Endothelial cell of umbilical vein (primary cell): ENCODE measurements at regions of chr15 and their contacts with region 1.

Region 1: GRCh38 chr15:59174835-59175831 is 31.5 kb upstream of the LDHAL6B start:
- DNase-seq: peak; percentile 75
- H3K4me3 ChIP-seq: no peak overlapping the region
- H3K27ac ChIP-seq: peak overlapping the region; percentile 62
- H3K4me1 ChIP-seq: peaks cover 29% of the 10 kb centered on the region
- H3K27me3 ChIP-seq: no peaks in the 10 kb centered on the region
- CTCF ChIP-seq: peak; percentile 64 to 70
- POLR2A ChIP-seq: no peak

Region 2: GRCh38 chr15:59237119-59237855 is 62.2 kb after region 1 on chr15:
- CTCF ChIA-PET with region 1: interaction called, 4 read pairs
- POLR2A ChIA-PET with region 1: interaction called, 3 read pairs
- dilution Hi-C with region 1: no loop called
- intact Hi-C with region 1: loop called (anchors 2 kb)
- DNase-seq: peak; percentile 84
- H3K4me3 ChIP-seq: no peak overlapping the region
- H3K27ac ChIP-seq: peak overlapping the region; percentile 92
- H3K4me1 ChIP-seq: peaks cover 30% of the 10 kb centered on the region
- H3K27me3 ChIP-seq: no peaks in the 10 kb centered on the region
- CTCF ChIP-seq: no peak
- POLR2A ChIP-seq: no peak

Region 3: DNA sequence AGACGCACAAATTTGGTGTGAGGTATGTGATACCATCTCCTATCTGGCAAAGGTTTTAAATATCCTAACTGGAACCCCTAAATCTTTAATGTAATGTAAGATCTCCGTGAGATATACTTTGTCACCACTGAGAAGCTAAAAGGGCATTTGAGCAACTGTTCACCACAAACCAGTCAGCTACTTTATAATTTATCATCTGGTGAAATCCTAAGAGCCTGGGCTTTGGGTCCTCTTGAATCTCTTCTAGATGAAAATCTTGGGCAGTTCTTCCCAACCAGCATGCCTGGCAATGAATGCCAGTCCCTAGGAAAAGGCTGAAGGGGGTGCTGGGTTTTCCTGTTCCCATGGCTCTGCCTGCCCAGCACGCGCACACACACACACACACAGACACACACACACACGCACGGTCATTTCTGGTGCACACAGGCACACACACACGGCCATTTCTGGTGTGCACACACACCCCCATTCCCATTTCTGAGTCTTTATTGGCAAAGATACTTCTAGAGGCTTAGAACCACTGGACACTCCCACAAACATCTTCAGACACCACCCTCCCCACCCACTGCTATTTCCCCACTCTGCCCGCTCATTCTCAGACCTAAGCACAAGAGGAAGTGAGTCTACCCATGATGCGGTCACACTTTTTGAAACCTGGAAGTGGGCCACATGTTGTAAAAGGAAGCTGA is 124.9 kb after region 1 on chr15:
- CTCF ChIA-PET with region 1: interaction called, 5 read pairs
- POLR2A ChIA-PET with region 1: no interaction called
- dilution Hi-C with region 1: no loop called
- intact Hi-C with region 1: loop called (anchors 2 kb)
- DNase-seq: peak; percentile 94
- H3K4me3 ChIP-seq: peak overlapping the region in 1 of 3 experiments; percentile 28
- H3K27ac ChIP-seq: peak overlapping the region; percentile 78
- H3K4me1 ChIP-seq: peaks cover 54% of the 10 kb centered on the region
- H3K27me3 ChIP-seq: no peaks in the 10 kb centered on the region
- CTCF ChIP-seq: no peak
- POLR2A ChIP-seq: no peak

Region 4: DNA sequence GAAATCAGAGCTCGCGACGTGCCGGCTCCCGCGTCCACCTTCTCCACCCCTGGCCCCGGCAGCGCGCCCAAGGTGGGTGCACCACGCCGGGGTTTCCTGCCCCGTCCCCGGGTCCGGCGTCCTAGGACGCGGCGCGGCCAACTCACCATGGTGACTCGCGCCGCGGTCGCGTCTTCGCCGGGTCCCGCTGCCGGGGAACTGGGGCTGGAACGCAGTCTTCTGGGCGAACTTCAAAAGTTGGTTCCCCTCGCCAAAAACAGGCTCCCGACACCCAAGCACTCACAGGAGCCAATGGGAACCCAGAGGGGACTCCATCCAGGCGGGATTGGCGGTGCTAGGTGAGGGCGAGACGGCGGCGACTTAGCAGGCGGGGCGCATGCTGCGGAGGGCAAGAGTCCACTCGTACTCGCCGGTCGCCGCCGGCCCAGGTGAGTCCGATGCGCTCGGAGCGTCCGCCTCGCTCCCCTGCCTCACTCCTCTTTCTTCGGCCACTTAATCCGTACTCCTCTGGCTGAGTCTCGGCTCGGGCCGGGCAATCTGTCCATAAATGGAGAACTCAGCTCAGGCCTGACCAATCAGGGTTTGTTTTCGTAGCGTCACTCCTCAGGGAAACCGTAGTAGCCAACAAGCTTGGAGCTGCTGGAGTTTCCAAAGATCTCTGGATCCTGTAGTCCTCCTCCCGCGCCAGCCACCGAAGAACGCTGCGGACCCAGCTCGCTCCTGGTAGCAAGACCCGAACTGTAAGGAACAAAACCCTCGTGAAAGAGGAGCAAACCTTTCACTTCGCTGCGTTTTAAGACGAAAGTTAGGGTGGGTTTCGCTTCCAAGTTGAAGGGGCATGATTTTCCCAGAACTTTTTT is 197.4 kb after region 1 on chr15 and contains the start of gene MYO1E:
- CTCF ChIA-PET with region 1: interaction called, 8 read pairs
- POLR2A ChIA-PET with region 1: interaction called, 4 read pairs
- dilution Hi-C with region 1: no loop called
- intact Hi-C with region 1: loop called (anchors 1 kb)
- DNase-seq: peak; percentile 98
- H3K4me3 ChIP-seq: peak within 1 kb of the TSS; percentile 85 to 91 (median 88)
- H3K27ac ChIP-seq: peak within 1 kb of the TSS; percentile 82
- H3K4me1 ChIP-seq: peaks cover 27% of the 10 kb centered on the region
- H3K27me3 ChIP-seq: no peaks in the 10 kb centered on the region
- CTCF ChIP-seq: no peak
- POLR2A ChIP-seq: peak; percentile 97
- total RNA-seq, gene MYO1E: 218 and 231 TPM in 2 replicates

Region 5: GRCh38 chr15:59410391-59410896 is 235.3 kb after region 1 on chr15:
- CTCF ChIA-PET with region 1: interaction called, 5 read pairs
- POLR2A ChIA-PET with region 1: no interaction called
- dilution Hi-C with region 1: no loop called
- intact Hi-C with region 1: loop called (anchors 2 kb)
- DNase-seq: no peak
- H3K4me3 ChIP-seq: no peak overlapping the region
- H3K27ac ChIP-seq: no peak overlapping the region
- H3K4me1 ChIP-seq: no peaks in the 10 kb centered on the region
- H3K27me3 ChIP-seq: peaks cover 0 to 5% of the 10 kb centered on the region in 2 experiments
- CTCF ChIP-seq: no peak
- POLR2A ChIP-seq: no peak

Region 6: DNA sequence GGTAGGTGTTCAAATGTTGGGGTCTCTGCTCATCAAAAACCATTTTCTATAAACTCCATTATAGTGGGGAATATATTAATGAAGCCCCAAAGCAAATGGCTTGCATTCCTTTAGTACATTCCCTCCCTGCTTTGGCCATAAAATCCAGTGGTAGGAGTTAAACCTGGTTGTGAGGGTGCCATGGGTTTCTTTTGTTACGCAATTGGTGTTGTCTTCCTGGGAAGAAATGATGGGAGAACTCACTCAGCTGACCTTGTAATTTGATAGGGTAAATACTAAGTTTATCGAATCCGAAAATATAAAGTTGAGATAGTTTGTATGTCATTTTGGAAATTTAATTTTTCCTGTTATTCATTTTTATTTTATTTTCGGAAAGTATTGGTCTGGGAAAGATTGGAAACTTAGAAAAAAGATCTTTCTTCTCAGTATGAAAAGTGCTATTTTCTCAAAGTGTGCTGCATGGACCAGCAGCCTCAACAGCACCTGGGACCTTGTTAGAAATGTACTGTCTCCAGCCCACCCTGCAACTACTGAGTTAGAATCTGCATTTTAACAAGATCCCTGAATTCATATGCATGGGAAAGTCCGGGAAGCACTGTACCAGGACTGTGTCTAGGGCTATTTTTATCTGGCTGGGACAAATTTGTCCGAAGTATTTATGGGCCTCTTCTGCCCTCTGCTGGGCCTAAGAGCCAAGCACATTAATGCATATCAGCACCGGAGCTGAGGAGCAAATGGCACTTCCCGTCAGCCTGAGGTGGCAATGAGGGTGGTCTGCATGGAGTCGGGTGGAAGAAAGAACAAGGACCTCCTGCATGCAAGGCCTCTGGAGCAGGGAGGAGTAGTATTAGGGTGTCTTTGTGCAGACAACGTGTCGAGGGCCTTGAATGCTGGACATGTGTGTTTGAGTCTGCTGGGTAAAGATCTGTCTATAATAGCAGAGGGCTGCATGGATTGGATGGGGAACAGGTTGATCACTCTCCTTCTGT is 317.6 kb after region 1 on chr15:
- CTCF ChIA-PET with region 1: interaction called, 14 read pairs
- POLR2A ChIA-PET with region 1: no interaction called
- dilution Hi-C with region 1: no loop called
- intact Hi-C with region 1: loop called (anchors 1 kb)
- DNase-seq: peak; percentile 73
- H3K4me3 ChIP-seq: no peak overlapping the region
- H3K27ac ChIP-seq: no peak overlapping the region
- H3K4me1 ChIP-seq: no peaks in the 10 kb centered on the region
- H3K27me3 ChIP-seq: no peaks in the 10 kb centered on the region
- CTCF ChIP-seq: peak; percentile 68 to 86
- POLR2A ChIP-seq: no peak

Region 7: GRCh38 chr15:59688841-59689625 is 513.9 kb after region 1 on chr15 and contains the start of gene BNIP2:
- CTCF ChIA-PET with region 1: no interaction called
- POLR2A ChIA-PET with region 1: no interaction called
- dilution Hi-C with region 1: no loop called
- intact Hi-C with region 1: no loop called
- DNase-seq: peak; percentile 99
- H3K4me3 ChIP-seq: peak within 1 kb of the TSS; percentile 66 to 100 (median 100)
- H3K27ac ChIP-seq: peak within 1 kb of the TSS; percentile 100
- H3K4me1 ChIP-seq: peaks cover 43% of the 10 kb centered on the region
- H3K27me3 ChIP-seq: no peaks in the 10 kb centered on the region
- CTCF ChIP-seq: no peak
- POLR2A ChIP-seq: peak; percentile 90
- total RNA-seq, gene BNIP2: 90.1 and 99.2 TPM in 2 replicates